GM12878 (cell line): ENCODE measurements at regions of chr13 and their contacts with region 1.

Region 1: GRCh38 chr13:99176309-99177276 is 24.1 kb upstream of the UBAC2 start:
- DNase-seq: no peak
- ATAC-seq: peak; percentile 96
- H3K4me3 ChIP-seq: no peak overlapping the region
- H3K27ac ChIP-seq: no peak overlapping the region
- H3K4me1 ChIP-seq: peaks cover 4% of the 10 kb centered on the region
- H3K27me3 ChIP-seq: peaks cover 0 to 2% of the 10 kb centered on the region in 2 experiments; a peak in 1 of 4 replicates
- CTCF ChIP-seq: peak; percentile 84 to 96 (median 93)
- EP300 ChIP-seq: no peak
- POLR2A ChIP-seq: no peak
- RAD21 ChIP-seq: peak; percentile 99

Region 2: DNA sequence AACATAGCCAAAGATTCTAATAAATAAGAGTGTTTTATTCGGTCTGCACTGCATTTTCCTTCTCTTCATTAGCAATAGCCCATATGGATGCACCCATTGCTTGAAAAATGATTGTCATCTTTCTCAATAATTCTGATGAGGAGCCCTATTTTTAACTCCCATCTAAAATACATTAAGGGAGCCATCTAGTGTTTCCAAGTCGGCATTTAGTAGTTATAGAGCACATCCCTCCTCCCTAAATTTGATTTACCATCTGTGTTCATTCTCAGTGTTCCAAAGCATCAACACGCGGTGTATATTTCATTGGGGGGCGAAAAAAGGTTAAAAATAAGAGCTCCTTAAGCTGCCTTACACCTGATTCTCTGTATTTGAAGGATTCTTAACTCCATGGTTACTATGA is 1342.3 kb before region 1 on chr13:
- CTCF ChIA-PET with region 1: no interaction called
- POLR2A ChIA-PET with region 1: no interaction called
- RAD21 ChIA-PET with region 1: no interaction called
- SMC1A ChIA-PET with region 1: no interaction called
- in situ Hi-C with region 1: no loop called
- intact Hi-C with region 1: no loop called
- DNase-seq: no peak
- ATAC-seq: no peak
- H3K4me3 ChIP-seq: no peak overlapping the region
- H3K27ac ChIP-seq: no peak overlapping the region
- H3K4me1 ChIP-seq: no peaks in the 10 kb centered on the region
- H3K27me3 ChIP-seq: peaks cover 0 to 1% of the 10 kb centered on the region in 2 experiments; a peak in 1 of 4 replicates
- CTCF ChIP-seq: no peak
- EP300 ChIP-seq: no peak
- POLR2A ChIP-seq: no peak
- RAD21 ChIP-seq: no peak

Region 3: GRCh38 chr13:98869408-98870090 is 307.0 kb before region 1 on chr13:
- CTCF ChIA-PET with region 1: interaction called, 12 read pairs
- POLR2A ChIA-PET with region 1: no interaction called
- RAD21 ChIA-PET with region 1: no interaction called
- SMC1A ChIA-PET with region 1: interaction called, 7 read pairs
- in situ Hi-C with region 1: no loop called
- intact Hi-C with region 1: no loop called
- DNase-seq: no peak
- ATAC-seq: peak; percentile 63; the same call in 2 of the 3 replicates
- H3K4me3 ChIP-seq: no peak overlapping the region
- H3K27ac ChIP-seq: no peak overlapping the region
- H3K4me1 ChIP-seq: no peaks in the 10 kb centered on the region
- H3K27me3 ChIP-seq: no peaks in the 10 kb centered on the region
- CTCF ChIP-seq: peak in 2 of 3 experiments; percentile 28 to 34; a peak in 4 of 6 replicates
- EP300 ChIP-seq: no peak
- POLR2A ChIP-seq: no peak
- RAD21 ChIP-seq: peak; percentile 26; the same call in 1 of the 2 replicates

Region 4: DNA sequence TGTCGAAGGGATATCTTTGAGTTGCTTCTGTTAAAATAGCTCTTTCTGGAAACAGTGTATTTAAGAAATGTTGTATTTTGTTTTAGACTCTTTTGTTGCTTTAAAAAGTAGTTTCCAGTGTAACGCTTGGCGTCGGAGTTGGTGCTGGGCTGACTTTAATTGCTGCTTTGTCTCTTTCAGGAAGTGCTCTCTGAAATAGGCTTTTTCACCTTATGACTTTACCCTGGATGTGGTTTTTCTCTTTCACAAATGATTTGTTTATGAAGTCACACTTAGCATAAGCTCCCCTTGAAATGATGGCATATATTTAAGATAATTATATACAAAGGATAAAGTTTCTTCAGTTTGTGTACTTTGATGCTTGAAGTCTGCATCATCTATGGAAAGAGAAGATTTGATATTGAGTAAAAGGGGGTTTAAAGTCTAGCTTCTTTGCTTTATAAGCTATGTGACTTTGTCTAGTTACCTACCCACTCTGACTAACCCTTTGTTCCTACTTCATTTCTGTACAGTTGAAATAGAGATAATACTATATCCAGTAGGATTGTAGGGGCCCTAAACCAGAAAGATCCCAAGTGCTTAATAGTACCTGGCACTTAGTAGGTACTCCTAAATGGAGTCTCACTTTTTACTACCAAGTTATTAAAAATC is 81.7 kb after region 1 on chr13 and contains the start of gene GPR18:
- CTCF ChIA-PET with region 1: interaction called, 470 read pairs
- POLR2A ChIA-PET with region 1: no interaction called
- RAD21 ChIA-PET with region 1: interaction called, 17 read pairs
- SMC1A ChIA-PET with region 1: interaction called, 269 read pairs
- in situ Hi-C with region 1: loop called (anchors 5 kb)
- intact Hi-C with region 1: no loop called
- DNase-seq: peak; percentile 67
- ATAC-seq: peak; percentile 89
- H3K4me3 ChIP-seq: peak within 1 kb of the TSS; percentile 64
- H3K27ac ChIP-seq: peak within 1 kb of the TSS; percentile 38
- H3K4me1 ChIP-seq: peaks cover 21% of the 10 kb centered on the region
- H3K27me3 ChIP-seq: no peaks in the 10 kb centered on the region
- CTCF ChIP-seq: no peak
- EP300 ChIP-seq: peak in 1 of 2 experiments; percentile 58; a peak in 1 of 4 replicates
- POLR2A ChIP-seq: no peak
- RAD21 ChIP-seq: peak; percentile 22; the same call in 1 of the 2 replicates
- polyA plus RNA-seq, gene GPR18: 3.9 to 8.4 TPM

Region 5: GRCh38 chr13:99264051-99264450 is 87.5 kb after region 1 on chr13:
- CTCF ChIA-PET with region 1: interaction called, 470 read pairs
- POLR2A ChIA-PET with region 1: interaction called, 4 read pairs
- RAD21 ChIA-PET with region 1: interaction called, 338 read pairs
- SMC1A ChIA-PET with region 1: interaction called, 269 read pairs
- in situ Hi-C with region 1: loop called (anchors 5 kb)
- intact Hi-C with region 1: loop called (anchors 1 kb)
- DNase-seq: no peak
- ATAC-seq: no peak
- H3K4me3 ChIP-seq: no peak overlapping the region
- H3K27ac ChIP-seq: no peak overlapping the region
- H3K4me1 ChIP-seq: peaks cover 6% of the 10 kb centered on the region; the same call in 1 of the 2 replicates
- H3K27me3 ChIP-seq: no peaks in the 10 kb centered on the region
- CTCF ChIP-seq: no peak
- EP300 ChIP-seq: no peak
- POLR2A ChIP-seq: no peak
- RAD21 ChIP-seq: no peak